ENCODE measurements at regions of chr5 and their contacts with region 1.

Region 1: GRCh38 chr5:134904630-134905245 is at the start of gene PCBD2:
- DNase-seq: peak; percentile 94
- ATAC-seq: peak; percentile 88
- H3K4me3 Mint-ChIP-seq: peak within 1 kb of the TSS; percentile 94
- H3K27ac Mint-ChIP-seq: peak within 1 kb of the TSS; percentile 98
- H3K4me1 Mint-ChIP-seq: peaks cover 27% of the 10 kb centered on the region
- H3K27me3 Mint-ChIP-seq: no peaks in the 10 kb centered on the region
- total RNA-seq, gene PCBD2: 11.3 to 14.4 TPM

Region 2: DNA sequence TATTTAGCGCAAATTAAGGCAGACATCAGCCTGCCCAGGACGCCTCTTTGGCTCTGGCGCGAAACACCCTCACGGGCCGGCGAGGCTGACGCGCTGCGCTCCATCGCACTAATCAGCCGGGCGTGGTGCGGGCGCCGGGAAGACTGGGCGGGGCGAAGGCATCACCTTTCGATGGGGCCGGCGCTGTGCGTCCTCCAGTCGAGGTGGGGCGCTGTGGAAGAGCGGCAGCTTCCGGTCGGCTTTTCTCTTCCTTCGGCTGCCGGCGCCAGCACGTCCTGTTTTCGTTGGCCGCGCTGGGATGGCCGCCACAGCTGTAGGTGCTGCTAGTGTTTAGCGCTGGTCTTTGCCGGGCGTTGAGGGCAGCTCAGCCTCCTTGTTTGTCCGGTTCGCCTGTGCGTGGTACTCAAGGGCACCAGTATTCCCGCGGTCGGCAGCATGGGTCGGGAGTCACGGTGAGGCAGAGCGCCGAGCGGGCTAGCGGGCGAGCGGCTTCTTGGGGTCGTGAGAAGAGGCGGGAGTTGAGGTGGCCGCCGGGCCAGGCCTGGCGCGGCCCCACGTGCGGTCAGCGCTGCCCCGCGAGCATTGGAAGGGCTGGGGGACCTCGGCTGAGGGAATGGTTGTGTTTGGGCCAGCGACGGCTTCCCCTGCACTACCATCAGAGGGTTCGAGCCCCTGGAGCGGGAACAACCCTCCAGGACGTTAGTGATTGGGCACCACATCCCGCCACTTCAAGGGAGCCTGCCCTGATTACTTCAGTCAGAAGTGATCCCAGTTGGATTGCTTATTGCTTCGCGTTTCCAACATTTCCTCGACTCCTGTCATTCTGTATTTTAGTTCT is 146.0 kb before region 1 on chr5 and contains the start of gene DDX46:
- CTCF ChIA-PET with region 1: interaction called, 7 read pairs
- POLR2A ChIA-PET with region 1: interaction called, 17 read pairs
- DNase-seq: peak; percentile 97
- ATAC-seq: peak; percentile 98
- H3K4me3 Mint-ChIP-seq: peak within 1 kb of the TSS; percentile 99
- H3K27ac Mint-ChIP-seq: peak within 1 kb of the TSS; percentile 97
- H3K4me1 Mint-ChIP-seq: peaks cover 31% of the 10 kb centered on the region
- H3K27me3 Mint-ChIP-seq: no peaks in the 10 kb centered on the region
- total RNA-seq, gene DDX46: 69.6 to 72.8 TPM

Region 3: DNA sequence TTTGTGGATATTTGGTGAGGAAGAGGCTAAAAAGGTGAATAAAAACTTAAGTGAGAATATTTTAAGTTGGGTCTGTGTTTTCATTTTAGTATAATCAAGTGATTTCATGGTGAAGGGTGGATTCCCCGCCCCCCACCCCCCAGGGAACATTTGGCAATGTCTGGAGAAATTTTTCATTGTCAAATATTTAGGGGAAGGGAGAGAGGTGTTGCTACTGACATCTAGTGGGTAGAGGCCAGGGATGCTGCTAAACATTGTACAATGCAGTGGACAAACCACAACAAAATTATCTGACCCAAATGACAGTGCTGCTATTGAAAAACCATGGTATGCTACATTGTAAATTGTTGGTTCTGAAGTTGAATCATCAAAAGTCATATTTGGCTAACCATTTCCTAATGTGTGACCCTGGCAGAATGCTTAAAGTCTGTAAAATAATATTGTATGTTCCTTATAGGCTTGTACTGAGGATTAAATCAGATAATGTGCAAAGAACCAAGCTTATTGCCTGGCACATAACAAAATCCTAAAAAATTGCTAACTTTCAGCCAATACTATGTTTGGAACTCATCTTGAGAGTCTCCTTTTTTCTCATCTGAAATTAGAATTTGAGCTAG is 53.3 kb before region 1 on chr5:
- CTCF ChIA-PET with region 1: interaction called, 11 read pairs
- POLR2A ChIA-PET with region 1: interaction called, 8 read pairs
- DNase-seq: no peak
- ATAC-seq: no peak
- H3K4me3 Mint-ChIP-seq: no peak overlapping the region
- H3K27ac Mint-ChIP-seq: peak overlapping the region; percentile 9
- H3K4me1 Mint-ChIP-seq: peaks cover 56% of the 10 kb centered on the region
- H3K27me3 Mint-ChIP-seq: no peaks in the 10 kb centered on the region

Region 4: GRCh38 chr5:134873987-134874830 is 30.5 kb before region 1 on chr5 and contains the start of gene TXNDC15:
- CTCF ChIA-PET with region 1: interaction called, 10 read pairs
- POLR2A ChIA-PET with region 1: interaction called, 17 read pairs
- DNase-seq: peak; percentile 87
- ATAC-seq: peak; percentile 95
- H3K4me3 Mint-ChIP-seq: peak within 1 kb of the TSS; percentile 97
- H3K27ac Mint-ChIP-seq: peak within 1 kb of the TSS; percentile 98
- H3K4me1 Mint-ChIP-seq: peaks cover 42% of the 10 kb centered on the region
- H3K27me3 Mint-ChIP-seq: no peaks in the 10 kb centered on the region
- total RNA-seq, gene TXNDC15: 42.6 to 46.7 TPM

Measured in activated CD8-positive, alpha-beta T cell treated with anti-CD3 and anti-CD28 coated beads, Interleukin-2, amount 10 ng/mL, durations not matched to agents 7 days and 5 days (primary cell).